CD4-positive, alpha-beta memory T cell (primary cell): ENCODE measurements at regions of chr1 and their contacts with region 1.

Region 1: GRCh38 chr1:167553136-167554027 is at the start of gene CREG1:
- DNase-seq: peak; percentile 85 to 93 (median 87)
- H3K4me3 ChIP-seq: peak within 1 kb of the TSS; percentile 74 to 77
- H3K4me3 Mint-ChIP-seq: peak within 1 kb of the TSS; percentile 87 to 94 (median 90)
- H3K27ac ChIP-seq: peak within 1 kb of the TSS; percentile 41
- H3K27ac Mint-ChIP-seq: peak within 1 kb of the TSS; percentile 36 to 89 (median 84)
- H3K4me1 ChIP-seq: peaks cover 30% of the 10 kb centered on the region
- H3K4me1 Mint-ChIP-seq: peaks cover 23 to 56% (median 39%) of the 10 kb centered on the region in 4 donors
- H3K27me3 ChIP-seq: no peaks in the 10 kb centered on the region
- H3K27me3 Mint-ChIP-seq: peaks cover 0 to 3% of the 10 kb centered on the region in 2 donors
- total RNA-seq, gene CREG1: 21.0 to 21.7 TPM

Region 2: GRCh38 chr1:166910396-166910994 is 642.9 kb before region 1 on chr1:
- CTCF ChIA-PET with region 1: interaction called, 5 read pairs
- POLR2A ChIA-PET with region 1: no interaction called
- intact Hi-C with region 1: loop called (anchors 5 kb)
- DNase-seq: peak; percentile 73 to 86 (median 80)
- H3K4me3 ChIP-seq: no peak overlapping the region
- H3K4me3 Mint-ChIP-seq: no peak overlapping the region
- H3K27ac ChIP-seq: no peak overlapping the region
- H3K27ac Mint-ChIP-seq: no peak overlapping the region
- H3K4me1 ChIP-seq: peaks cover 3% of the 10 kb centered on the region
- H3K4me1 Mint-ChIP-seq: peaks cover 0 to 7% (median 4%) of the 10 kb centered on the region in 4 donors
- H3K27me3 ChIP-seq: no peaks in the 10 kb centered on the region
- H3K27me3 Mint-ChIP-seq: peaks cover 0 to 5% of the 10 kb centered on the region in 2 donors

Region 3: GRCh38 chr1:167270349-167271092 is 282.9 kb before region 1 on chr1:
- CTCF ChIA-PET with region 1: interaction called, 22 read pairs
- POLR2A ChIA-PET with region 1: interaction called, 4 read pairs
- intact Hi-C with region 1: loop called (anchors 1 kb)
- DNase-seq: no peak
- H3K4me3 ChIP-seq: no peak overlapping the region
- H3K4me3 Mint-ChIP-seq: no peak overlapping the region
- H3K27ac ChIP-seq: no peak overlapping the region
- H3K27ac Mint-ChIP-seq: peak overlapping the region in 1 of 7 donors; percentile 7
- H3K4me1 ChIP-seq: peaks cover 5% of the 10 kb centered on the region
- H3K4me1 Mint-ChIP-seq: peaks cover 10 to 33% (median 13%) of the 10 kb centered on the region in 4 donors
- H3K27me3 ChIP-seq: no peaks in the 10 kb centered on the region
- H3K27me3 Mint-ChIP-seq: no peaks in the 10 kb centered on the region

Region 4: GRCh38 chr1:167499664-167500101 is 53.7 kb before region 1 on chr1:
- CTCF ChIA-PET with region 1: no interaction called
- POLR2A ChIA-PET with region 1: no interaction called
- intact Hi-C with region 1: loop called (anchors 10 kb)
- DNase-seq: peak in 1 of 5 donors; percentile 62
- H3K4me3 ChIP-seq: no peak overlapping the region
- H3K4me3 Mint-ChIP-seq: peak overlapping the region in 7 of 8 donors; percentile 26 to 88 (median 73)
- H3K27ac ChIP-seq: peak overlapping the region; percentile 32
- H3K27ac Mint-ChIP-seq: peak overlapping the region; percentile 75 to 100 (median 88)
- H3K4me1 ChIP-seq: peaks cover 100% of the 10 kb centered on the region
- H3K4me1 Mint-ChIP-seq: peaks cover 83 to 100% (median 95%) of the 10 kb centered on the region in 4 donors
- H3K27me3 ChIP-seq: no peaks in the 10 kb centered on the region
- H3K27me3 Mint-ChIP-seq: no peaks in the 10 kb centered on the region

Region 5: GRCh38 chr1:167542109-167543032 is 11.0 kb before region 1 on chr1:
- CTCF ChIA-PET with region 1: interaction called, 55 read pairs
- POLR2A ChIA-PET with region 1: interaction called, 3 read pairs
- intact Hi-C with region 1: no loop called
- DNase-seq: no peak
- H3K4me3 ChIP-seq: no peak overlapping the region
- H3K4me3 Mint-ChIP-seq: peak overlapping the region in 1 of 8 donors; percentile 33
- H3K27ac ChIP-seq: no peak overlapping the region
- H3K27ac Mint-ChIP-seq: peak overlapping the region in 5 of 7 donors; percentile 1 to 64 (median 32)
- H3K4me1 ChIP-seq: peaks cover 6% of the 10 kb centered on the region
- H3K4me1 Mint-ChIP-seq: peaks cover 9 to 19% (median 16%) of the 10 kb centered on the region in 4 donors
- H3K27me3 ChIP-seq: no peaks in the 10 kb centered on the region
- H3K27me3 Mint-ChIP-seq: no peaks in the 10 kb centered on the region

Region 6: DNA sequence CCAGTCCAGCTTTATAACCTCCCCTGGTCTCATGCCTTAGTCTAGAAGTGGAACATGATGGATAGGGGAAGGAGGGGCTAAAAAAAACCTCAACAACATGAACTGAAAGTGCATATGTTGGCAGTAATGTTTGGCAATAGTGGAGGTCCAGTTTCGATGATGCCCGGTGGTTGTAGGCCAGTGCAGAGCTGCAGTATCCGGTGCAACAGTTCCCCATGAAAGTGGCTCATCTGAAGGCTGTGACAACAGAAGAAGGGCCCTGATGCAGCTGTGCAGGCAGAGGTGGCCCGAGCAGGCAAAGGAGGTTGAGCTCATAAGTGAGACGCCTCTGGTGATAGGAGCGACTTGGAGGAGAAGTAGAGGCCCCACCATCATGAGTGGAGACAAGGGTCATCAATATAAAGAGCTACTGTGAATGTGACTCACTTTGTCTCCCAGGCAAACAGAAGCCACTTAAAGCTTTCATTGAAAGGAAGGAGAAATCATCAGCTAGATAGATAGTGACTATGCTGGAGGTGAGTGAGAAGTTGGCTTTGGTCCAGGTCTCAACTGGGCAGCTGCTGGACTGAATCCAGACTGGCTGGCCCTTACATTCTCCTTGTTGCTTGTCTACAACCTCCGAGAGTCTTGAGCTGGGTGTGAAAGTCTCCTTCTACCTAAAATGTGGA is 10.3 kb after region 1 on chr1:
- CTCF ChIA-PET with region 1: interaction called, 15 read pairs
- POLR2A ChIA-PET with region 1: interaction called, 8 read pairs
- intact Hi-C with region 1: no loop called
- DNase-seq: no peak
- H3K4me3 ChIP-seq: no peak overlapping the region
- H3K4me3 Mint-ChIP-seq: no peak overlapping the region
- H3K27ac ChIP-seq: no peak overlapping the region
- H3K27ac Mint-ChIP-seq: peak overlapping the region in 1 of 7 donors; percentile 42
- H3K4me1 ChIP-seq: no peaks in the 10 kb centered on the region
- H3K4me1 Mint-ChIP-seq: peaks cover 0 to 1% (median 0%) of the 10 kb centered on the region in 4 donors
- H3K27me3 ChIP-seq: no peaks in the 10 kb centered on the region
- H3K27me3 Mint-ChIP-seq: peaks cover 0 to 1% of the 10 kb centered on the region in 2 donors

Region 7: GRCh38 chr1:167635156-167635648 is 81.8 kb after region 1 on chr1:
- CTCF ChIA-PET with region 1: interaction called, 16 read pairs
- POLR2A ChIA-PET with region 1: interaction called, 5 read pairs
- intact Hi-C with region 1: loop called (anchors 1 kb)
- DNase-seq: no peak
- H3K4me3 ChIP-seq: no peak overlapping the region
- H3K4me3 Mint-ChIP-seq: peak overlapping the region in 4 of 8 donors; percentile 16 to 30 (median 23)
- H3K27ac ChIP-seq: no peak overlapping the region
- H3K27ac Mint-ChIP-seq: peak overlapping the region in 4 of 7 donors; percentile 57 to 97 (median 97)
- H3K4me1 ChIP-seq: peaks cover 90% of the 10 kb centered on the region
- H3K4me1 Mint-ChIP-seq: peaks cover 59 to 98% (median 73%) of the 10 kb centered on the region in 4 donors
- H3K27me3 ChIP-seq: no peaks in the 10 kb centered on the region
- H3K27me3 Mint-ChIP-seq: no peaks in the 10 kb centered on the region